Sigmoid colon (tissue), 7 donors: ENCODE measurements at regions of chr11 and their contacts with region 1.

Region 1: GRCh38 chr11:114159802-114160632 is 100.5 kb downstream of the ZBTB16 start:
- DNase-seq: peak; percentile 100
- H3K4me3 ChIP-seq: peak overlapping the region; percentile 14 to 30 (median 24)
- H3K27ac ChIP-seq: peak overlapping the region; percentile 94 to 99 (median 97)
- H3K4me1 ChIP-seq: peaks cover 0 to 93% (median 92%) of the 10 kb centered on the region in 4 donors
- H3K27me3 ChIP-seq: no peaks in the 10 kb centered on the region
- CTCF ChIP-seq: no peak
- EP300 ChIP-seq: peak; percentile 100
- POLR2A ChIP-seq: peak; percentile 64 to 73

Region 2: GRCh38 chr11:114050258-114050927 is 109.6 kb before region 1 on chr11:
- intact Hi-C with region 1: loop called (anchors 2 kb)
- DNase-seq: peak; percentile 93
- H3K4me3 ChIP-seq: no peak overlapping the region
- H3K27ac ChIP-seq: peak overlapping the region in 3 of 4 donors; percentile 74 to 80 (median 77)
- H3K4me1 ChIP-seq: peaks cover 0 to 46% (median 15%) of the 10 kb centered on the region in 4 donors
- H3K27me3 ChIP-seq: no peaks in the 10 kb centered on the region
- CTCF ChIP-seq: no peak
- EP300 ChIP-seq: peak; percentile 98 to 99 (median 99)
- POLR2A ChIP-seq: no peak

Region 3: GRCh38 chr11:114059278-114059983 is 100.6 kb before region 1 on chr11 and contains the start of gene ZBTB16:
- intact Hi-C with region 1: loop called (anchors 2 kb)
- DNase-seq: peak; percentile 98
- H3K4me3 ChIP-seq: peak within 1 kb of the TSS; percentile 68 to 99 (median 92)
- H3K27ac ChIP-seq: peak within 1 kb of the TSS; percentile 94 to 99 (median 96)
- H3K4me1 ChIP-seq: peaks cover 0 to 42% (median 38%) of the 10 kb centered on the region in 4 donors
- H3K27me3 ChIP-seq: no peaks in the 10 kb centered on the region
- CTCF ChIP-seq: peak in 1 of 4 experiments; percentile 34
- EP300 ChIP-seq: peak in 3 of 4 donors; percentile 53 to 81 (median 56)
- POLR2A ChIP-seq: peak; percentile 90 to 91
- total RNA-seq, gene ZBTB16: 99.5 to 197 (median 129) TPM

Region 4: GRCh38 chr11:114180301-114181055 is 20.5 kb after region 1 on chr11:
- intact Hi-C with region 1: loop called (anchors 1 kb)
- DNase-seq: no peak
- H3K4me3 ChIP-seq: peak overlapping the region; percentile 34 to 44 (median 36)
- H3K27ac ChIP-seq: peak overlapping the region; percentile 94 to 99 (median 97)
- H3K4me1 ChIP-seq: peaks cover 0 to 96% (median 92%) of the 10 kb centered on the region in 4 donors
- H3K27me3 ChIP-seq: no peaks in the 10 kb centered on the region
- CTCF ChIP-seq: peak in 2 of 4 experiments; percentile 27 to 50
- EP300 ChIP-seq: no peak
- POLR2A ChIP-seq: no peak

Region 5: DNA sequence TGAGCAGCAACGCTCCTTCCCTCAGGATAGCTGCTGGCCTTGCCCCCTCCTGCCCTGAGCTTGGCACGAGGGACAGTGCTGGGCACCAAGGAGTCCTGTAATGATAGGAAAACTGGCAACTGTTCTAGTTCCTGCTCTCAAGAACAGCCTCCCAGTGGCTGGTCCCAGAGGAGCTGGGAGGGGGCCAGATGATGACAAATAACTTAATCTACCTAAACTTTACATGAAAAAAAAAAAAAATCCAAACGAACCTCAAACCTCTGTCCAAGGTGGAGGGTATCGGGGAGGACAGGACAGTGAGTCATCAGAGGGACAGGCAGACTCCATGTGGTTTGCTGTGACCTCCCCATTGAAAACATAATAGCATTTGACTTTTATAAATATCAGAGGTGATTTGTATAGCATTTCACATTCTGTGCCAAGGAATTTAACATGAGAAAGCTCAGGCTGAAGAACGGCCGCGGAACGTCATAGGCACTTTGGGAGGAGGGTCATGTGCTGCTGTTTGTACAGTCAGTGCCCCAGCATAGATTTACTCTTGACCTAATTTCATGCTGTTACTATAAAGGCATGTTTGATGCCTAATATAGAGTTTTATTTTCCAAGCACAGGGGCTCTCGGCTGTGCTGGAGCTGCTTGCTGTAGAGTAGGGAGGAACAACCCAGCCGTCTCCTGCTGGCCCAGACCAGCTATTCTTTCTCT is 37.9 kb after region 1 on chr11:
- intact Hi-C with region 1: loop called (anchors 1 kb)
- DNase-seq: peak; percentile 97
- H3K4me3 ChIP-seq: peak overlapping the region in 1 of 4 donors; percentile 6
- H3K27ac ChIP-seq: peak overlapping the region; percentile 94 to 99 (median 96)
- H3K4me1 ChIP-seq: peaks cover 0 to 99% (median 94%) of the 10 kb centered on the region in 4 donors
- H3K27me3 ChIP-seq: no peaks in the 10 kb centered on the region
- CTCF ChIP-seq: no peak
- EP300 ChIP-seq: peak; percentile 100
- POLR2A ChIP-seq: peak; percentile 11 to 61

Region 6: GRCh38 chr11:114257621-114258558 is 97.9 kb after region 1 on chr11:
- intact Hi-C with region 1: loop called (anchors 5 kb)
- DNase-seq: peak; percentile 92
- H3K4me3 ChIP-seq: peak overlapping the region in 2 of 4 donors; percentile 11 to 13
- H3K27ac ChIP-seq: peak overlapping the region; percentile 77 to 85 (median 78)
- H3K4me1 ChIP-seq: peaks cover 0 to 63% (median 48%) of the 10 kb centered on the region in 4 donors
- H3K27me3 ChIP-seq: no peaks in the 10 kb centered on the region
- CTCF ChIP-seq: peak in 1 of 4 experiments; percentile 11
- EP300 ChIP-seq: no peak
- POLR2A ChIP-seq: no peak

Region 7: DNA sequence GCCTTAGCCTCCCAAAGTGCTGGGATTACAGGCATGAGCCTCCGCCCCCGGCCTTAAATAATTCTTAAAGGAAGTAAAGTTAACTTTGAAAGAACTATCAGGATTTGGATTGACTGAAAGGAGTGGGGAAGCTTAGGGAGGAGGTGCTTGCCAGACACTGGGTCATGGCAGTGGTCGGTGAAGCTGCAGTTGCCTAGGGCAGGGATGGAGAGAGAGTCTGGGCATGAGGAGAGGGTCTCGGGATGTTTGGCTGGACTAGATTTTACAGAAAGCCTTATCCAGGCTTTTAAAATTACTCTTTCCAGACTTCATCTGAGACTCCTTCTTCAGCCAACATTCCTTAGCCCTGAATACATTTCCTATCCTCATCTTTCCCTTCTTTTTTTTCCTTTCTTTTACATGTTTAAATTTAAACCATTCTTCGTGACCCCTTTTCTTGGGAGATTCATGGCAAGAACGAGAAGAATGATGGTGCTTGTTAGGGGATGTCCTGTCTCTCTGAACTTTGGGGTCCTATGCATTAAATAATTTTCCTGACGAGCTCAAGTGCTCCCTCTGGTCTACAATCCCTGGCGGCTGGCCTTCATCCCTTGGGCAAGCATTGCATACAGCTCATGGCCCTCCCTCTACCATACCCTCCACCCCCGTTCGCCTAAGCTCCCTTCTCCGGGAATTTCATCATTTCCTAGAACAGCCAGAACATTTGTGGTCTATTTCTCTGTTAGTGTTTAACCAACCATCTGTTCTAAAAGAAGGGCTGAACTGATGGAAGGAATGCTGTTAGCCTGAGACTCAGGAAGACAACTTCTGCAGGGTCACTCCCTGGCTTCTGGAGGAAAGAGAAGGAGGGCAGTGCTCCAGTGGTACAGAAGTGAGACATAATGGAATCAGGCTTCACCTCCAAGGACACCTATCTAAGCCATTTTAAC is 135.9 kb after region 1 on chr11 and contains the start of gene NNMT:
- intact Hi-C with region 1: loop called (anchors 1 kb)
- DNase-seq: peak; percentile 90
- H3K4me3 ChIP-seq: peak within 1 kb of the TSS; percentile 24 to 43 (median 40)
- H3K27ac ChIP-seq: peak within 1 kb of the TSS; percentile 81 to 96 (median 86)
- H3K4me1 ChIP-seq: peaks cover 0 to 64% (median 58%) of the 10 kb centered on the region in 4 donors
- H3K27me3 ChIP-seq: no peaks in the 10 kb centered on the region
- CTCF ChIP-seq: no peak
- EP300 ChIP-seq: peak in 3 of 4 donors; percentile 68 to 81 (median 79)
- POLR2A ChIP-seq: peak in 1 of 2 donors; percentile 17
- total RNA-seq, gene NNMT: 126 to 960 (median 409) TPM